ENCODE measurements at regions of chr5 and their contacts with region 1.

Region 1: DNA sequence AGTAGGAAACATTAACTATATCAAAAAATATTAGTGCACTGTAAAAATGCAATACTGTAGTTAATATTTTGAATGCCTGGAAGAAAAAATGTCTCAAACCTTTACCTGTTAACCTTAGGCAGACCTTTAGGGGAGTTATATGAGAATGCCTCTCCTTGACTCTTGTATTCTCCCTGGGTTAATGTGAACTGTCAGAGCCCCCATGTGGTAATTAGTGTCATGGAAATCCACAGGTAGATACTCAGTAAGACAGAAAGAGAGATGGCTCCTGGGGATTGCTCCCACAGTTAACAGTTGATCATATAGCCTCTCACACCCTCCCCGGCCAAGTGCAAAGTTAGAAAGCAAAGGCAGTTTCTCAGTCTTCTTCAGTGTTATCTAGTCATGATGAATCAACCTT is 742.8 kb downstream of the NR2F1-AS1 start:
- DNase-seq: peak; percentile 62
- H3K4me3 Mint-ChIP-seq: no peak overlapping the region
- H3K27ac Mint-ChIP-seq: no peak overlapping the region
- H3K4me1 Mint-ChIP-seq: peaks cover 15% of the 10 kb centered on the region
- H3K27me3 Mint-ChIP-seq: no peaks in the 10 kb centered on the region
- CTCF ChIP-seq: peak; percentile 8

Region 2: DNA sequence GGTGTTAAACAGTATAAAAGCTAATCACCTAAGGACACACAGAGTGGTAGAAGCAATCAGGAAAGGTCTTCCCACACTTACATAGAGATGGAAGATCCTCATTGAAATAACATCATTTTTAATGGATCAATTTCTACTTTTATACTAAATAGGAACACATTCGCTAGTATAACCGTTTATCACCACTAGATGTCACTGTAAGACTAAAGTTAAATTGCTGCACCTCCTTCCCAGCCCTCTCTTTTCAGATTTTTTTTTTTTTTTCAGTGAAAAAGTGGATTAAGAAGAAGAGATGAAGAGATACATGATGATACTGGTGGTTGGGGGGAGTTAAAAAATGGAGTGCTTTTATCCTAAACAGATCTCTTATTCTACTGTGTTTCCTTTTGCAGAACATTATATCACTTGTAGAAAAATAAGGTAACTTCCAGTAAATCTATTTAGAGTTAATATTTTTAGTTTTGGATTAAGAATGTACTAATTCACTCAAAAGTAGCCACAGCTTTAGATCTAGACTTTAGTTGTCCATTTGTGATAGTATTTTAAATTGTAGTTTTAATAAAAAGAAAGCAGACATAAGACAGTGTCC is 1338.2 kb before region 1 on chr5:
- CTCF ChIA-PET with region 1: interaction called, 3 read pairs
- POLR2A ChIA-PET with region 1: no interaction called
- intact Hi-C with region 1: loop called (anchors 5 kb)
- DNase-seq: peak; percentile 60
- H3K4me3 Mint-ChIP-seq: no peak overlapping the region
- H3K27ac Mint-ChIP-seq: no peak overlapping the region
- H3K4me1 Mint-ChIP-seq: no peaks in the 10 kb centered on the region
- H3K27me3 Mint-ChIP-seq: peaks cover 20% of the 10 kb centered on the region
- CTCF ChIP-seq: peak; percentile 47

Region 3: DNA sequence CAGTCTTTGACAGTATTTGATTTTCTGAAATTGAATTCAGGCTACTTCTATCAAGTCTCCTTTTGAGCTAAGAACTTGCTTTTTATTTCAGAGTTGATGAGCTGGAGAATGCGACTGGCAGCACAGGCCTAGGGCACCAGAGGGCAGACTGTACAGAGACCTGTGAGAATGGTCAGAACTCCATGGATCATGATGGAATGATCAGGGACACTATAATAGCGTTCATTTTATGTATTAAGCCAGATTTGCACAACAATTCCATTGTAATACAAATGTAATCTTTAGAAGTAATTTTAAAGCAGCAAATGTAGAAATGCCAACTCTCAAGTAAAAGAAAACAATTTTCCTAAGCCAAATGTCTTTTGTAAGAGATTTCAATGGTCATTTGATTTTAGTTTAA is 159.6 kb before region 1 on chr5:
- CTCF ChIA-PET with region 1: no interaction called
- POLR2A ChIA-PET with region 1: no interaction called
- intact Hi-C with region 1: loop called (anchors 10 kb)
- DNase-seq: peak; percentile 24
- H3K4me3 Mint-ChIP-seq: no peak overlapping the region
- H3K27ac Mint-ChIP-seq: no peak overlapping the region
- H3K4me1 Mint-ChIP-seq: no peaks in the 10 kb centered on the region
- H3K27me3 Mint-ChIP-seq: no peaks in the 10 kb centered on the region
- CTCF ChIP-seq: no peak

Region 4: DNA sequence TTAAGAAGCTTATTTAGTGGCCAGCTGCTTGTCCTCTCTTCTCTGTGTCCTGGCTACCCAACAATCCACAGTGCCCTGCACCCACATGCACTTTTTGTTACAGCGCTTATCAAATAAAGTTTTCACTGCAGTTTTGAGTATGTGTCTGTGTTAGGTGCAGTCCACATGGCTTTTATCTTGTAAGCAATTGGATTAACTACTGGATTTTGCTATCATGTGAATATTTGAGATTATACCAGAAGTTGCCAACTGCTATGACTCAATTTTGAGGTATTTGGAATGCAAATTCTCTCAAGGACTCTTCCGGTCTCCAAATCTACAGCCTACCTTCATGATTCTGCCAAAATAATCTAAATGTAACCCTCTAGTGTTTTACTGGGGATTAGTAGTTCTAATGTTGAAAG is 52.6 kb after region 1 on chr5:
- CTCF ChIA-PET with region 1: no interaction called
- POLR2A ChIA-PET with region 1: no interaction called
- intact Hi-C with region 1: no loop called
- DNase-seq: no peak
- H3K4me3 Mint-ChIP-seq: no peak overlapping the region
- H3K27ac Mint-ChIP-seq: no peak overlapping the region
- H3K4me1 Mint-ChIP-seq: peaks cover 9% of the 10 kb centered on the region
- H3K27me3 Mint-ChIP-seq: no peaks in the 10 kb centered on the region
- CTCF ChIP-seq: no peak